ENCODE measurements at regions of chr16 and their contacts with region 1.

Region 1: DNA sequence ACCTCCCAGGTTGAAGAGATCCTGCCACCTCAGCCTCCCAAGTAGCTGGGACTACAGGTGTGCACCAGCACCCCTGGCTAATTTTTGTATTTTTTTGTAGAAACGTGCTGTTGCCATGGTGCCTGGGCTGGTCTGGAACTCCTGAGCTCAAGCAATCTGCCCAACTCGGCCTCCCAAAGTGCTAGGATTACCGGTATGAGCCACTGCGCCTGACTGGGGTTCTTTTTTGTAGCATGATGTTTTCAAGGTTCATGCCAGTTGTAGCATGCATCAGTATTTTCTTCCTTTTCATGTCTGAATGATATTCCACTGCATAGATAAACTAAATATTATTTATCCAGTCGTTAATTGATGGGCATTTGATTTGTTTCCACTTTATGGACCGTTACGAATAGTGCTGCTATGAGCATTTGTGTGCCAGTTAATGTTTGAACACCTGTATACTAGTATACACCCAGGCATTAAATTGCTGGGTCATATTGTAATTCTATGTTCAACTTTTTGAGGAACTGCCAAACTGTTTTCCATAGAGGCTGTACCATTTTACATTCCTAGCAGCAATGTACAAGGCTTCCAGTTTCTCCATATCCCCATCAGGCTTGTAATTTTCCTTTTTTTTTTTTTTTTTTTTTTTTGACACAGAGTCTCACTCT is 24.8 kb upstream of the CEP20 start:
- DNase-seq: no peak
- H3K4me3 Mint-ChIP-seq: no peak overlapping the region
- H3K27ac Mint-ChIP-seq: peak overlapping the region; percentile 77
- H3K4me1 Mint-ChIP-seq: peaks cover 17% of the 10 kb centered on the region
- H3K27me3 Mint-ChIP-seq: peaks cover 2% of the 10 kb centered on the region

Region 2: GRCh38 chr16:15899538-15900100 is 13.6 kb before region 1 on chr16:
- intact Hi-C with region 1: loop called (anchors 1 kb)
- DNase-seq: peak; percentile 54
- H3K4me3 Mint-ChIP-seq: peak overlapping the region; percentile 46
- H3K27ac Mint-ChIP-seq: peak overlapping the region; percentile 6
- H3K4me1 Mint-ChIP-seq: peaks cover 33% of the 10 kb centered on the region
- H3K27me3 Mint-ChIP-seq: peaks cover 4% of the 10 kb centered on the region